Posterior vena cava (tissue), 2 donors: ENCODE measurements at regions of chr7 and their contacts with region 1.

Region 1: DNA sequence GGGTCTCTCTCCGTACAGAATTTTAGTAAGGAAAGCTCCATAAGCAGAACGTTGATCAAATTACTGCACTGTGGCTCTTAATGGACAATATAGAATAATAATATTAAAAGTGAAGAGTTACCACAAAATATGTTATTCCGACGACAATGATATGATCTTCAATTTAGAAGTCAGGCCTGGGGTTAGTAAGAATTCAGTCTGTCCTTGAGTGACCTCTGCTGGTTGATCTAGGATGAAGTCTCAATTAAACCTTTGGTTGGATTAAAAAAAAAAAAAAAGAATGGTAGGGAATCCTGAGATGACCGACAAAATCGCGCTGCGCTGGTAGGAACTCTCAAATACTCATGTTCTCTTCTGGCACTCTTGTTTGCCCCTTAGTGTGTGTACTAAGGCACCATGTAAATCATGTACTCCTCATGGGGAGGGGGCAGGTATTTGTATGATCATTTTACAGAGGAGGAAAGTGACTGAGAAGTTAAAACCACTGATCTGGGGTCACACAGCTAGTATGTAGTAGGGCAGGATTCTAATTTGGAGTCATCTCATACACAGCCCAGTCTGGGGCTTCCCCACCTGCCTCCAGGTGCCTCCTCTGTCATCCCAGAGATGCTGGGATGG is 161.3 kb upstream of the NPVF start:
- DNase-seq: no peak

Region 2: GRCh38 chr7:25405736-25406135 is 16.1 kb after region 1 on chr7:
- intact Hi-C with region 1: no loop called
- DNase-seq: no peak

Region 3: DNA sequence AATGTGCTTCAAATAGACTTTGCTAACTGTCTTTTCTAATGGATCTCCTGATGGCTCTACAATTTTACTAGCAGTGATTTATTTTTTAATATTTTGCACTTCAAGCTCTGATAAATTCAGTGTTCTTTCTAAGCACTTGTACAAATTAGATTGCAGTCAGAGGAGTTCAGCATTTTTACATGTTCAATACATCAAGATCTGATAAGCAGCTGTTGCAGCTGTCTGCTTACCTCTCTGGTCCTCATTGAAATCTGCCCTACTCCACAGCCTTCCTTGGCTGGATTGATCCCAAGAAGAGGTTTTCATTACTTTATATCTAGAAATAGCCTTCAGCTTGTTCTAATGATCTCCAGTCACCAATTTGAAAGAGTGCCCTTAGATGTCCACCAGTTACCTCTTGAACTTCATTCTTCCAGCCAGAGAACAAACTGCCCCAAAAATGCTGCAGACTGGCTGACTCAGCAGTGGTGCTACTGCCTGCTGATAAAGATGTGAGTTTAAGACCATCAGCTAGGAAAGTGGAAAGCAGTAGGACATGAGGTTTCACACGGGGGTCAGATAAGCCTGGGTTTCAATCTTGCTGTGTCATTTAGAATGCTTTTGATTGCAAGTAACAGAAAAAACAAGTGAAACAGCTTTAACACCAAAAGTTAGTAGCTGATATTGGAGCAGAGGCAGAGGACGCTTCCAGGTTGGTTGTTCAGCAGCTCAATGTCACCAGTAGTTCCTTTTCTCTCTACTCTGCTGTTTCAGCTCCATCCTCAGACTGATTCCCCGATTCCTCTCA is 189.6 kb after region 1 on chr7:
- intact Hi-C with region 1: loop called in 1 of 2 experiments (anchors 5 kb)
- DNase-seq: no peak